ENCODE measurements at regions of chr11 and their contacts with region 1.

Region 1: DNA sequence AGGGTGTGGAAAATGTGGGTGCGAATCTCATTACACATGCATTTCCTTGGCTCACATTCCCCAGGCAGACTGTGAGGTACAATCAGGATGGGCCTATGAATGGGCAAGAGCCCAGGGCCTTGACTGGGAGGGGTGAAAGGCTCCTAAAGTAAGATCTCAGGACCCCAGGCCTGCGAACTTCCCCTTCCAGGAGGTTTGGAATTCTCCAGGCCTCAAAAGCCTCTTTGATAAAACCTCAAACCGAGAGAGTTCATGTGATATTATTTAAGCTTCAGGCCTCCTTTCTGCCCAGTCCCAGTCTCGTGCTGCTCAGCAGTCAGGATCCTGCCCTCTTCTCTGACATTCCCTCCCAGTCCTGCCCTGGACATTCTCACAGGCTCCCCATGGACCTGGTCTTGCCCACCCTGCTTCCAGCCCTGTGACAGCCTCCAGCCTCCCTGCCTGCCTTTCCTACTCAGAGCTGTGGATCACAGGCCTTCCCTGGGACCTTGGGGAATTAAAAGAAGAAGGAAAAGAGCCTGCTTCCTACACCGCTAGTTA is 37.3 kb upstream of the TEAD1 start:
- DNase-seq: no peak
- ATAC-seq: no peak
- H3K4me3 ChIP-seq: no peak overlapping the region
- H3K27ac ChIP-seq: no peak overlapping the region
- H3K4me1 ChIP-seq: no peaks in the 10 kb centered on the region
- H3K27me3 ChIP-seq: no peaks in the 10 kb centered on the region
- CTCF ChIP-seq: no peak

Region 2: DNA sequence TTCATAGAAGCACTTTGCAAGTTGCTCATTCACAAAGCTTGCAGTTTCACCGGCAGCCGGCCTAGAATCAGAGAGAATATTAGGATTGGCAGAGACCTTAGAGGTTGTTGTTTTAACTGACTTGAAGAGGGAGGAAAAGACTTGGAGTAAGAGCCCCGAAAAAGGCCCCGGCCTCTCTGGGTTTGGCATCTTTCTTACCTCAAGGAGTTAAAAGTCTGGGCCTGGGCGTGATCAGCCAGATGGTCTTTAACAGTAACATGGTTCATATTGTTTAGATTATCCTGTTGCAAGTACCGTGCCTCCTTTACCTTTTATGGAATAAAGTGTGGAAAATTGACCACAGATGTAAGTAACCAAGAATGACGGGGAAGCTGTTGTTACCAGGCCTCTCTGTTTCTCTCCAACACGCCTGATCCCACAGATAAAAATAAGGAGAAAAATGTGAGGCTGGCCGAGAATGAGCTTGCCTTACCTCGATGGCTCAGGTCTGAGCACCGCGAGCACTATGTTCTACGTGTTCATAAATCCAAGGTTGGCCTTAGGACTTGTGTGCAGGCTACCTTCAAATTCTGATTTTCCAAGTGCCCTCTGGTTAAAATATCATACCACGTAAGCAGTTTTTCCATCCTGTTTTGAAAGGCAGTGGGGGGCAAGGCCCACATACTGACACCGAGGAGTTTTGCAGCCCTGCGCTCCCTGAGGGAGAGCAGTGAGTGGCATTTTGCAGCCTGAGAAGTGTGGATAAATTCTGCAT is 203.2 kb before region 1 on chr11:
- CTCF ChIA-PET with region 1: no interaction called
- POLR2A ChIA-PET with region 1: interaction called, 10 read pairs
- intact Hi-C with region 1: no loop called
- DNase-seq: no peak
- ATAC-seq: no peak
- H3K4me3 ChIP-seq: no peak overlapping the region
- H3K27ac ChIP-seq: no peak overlapping the region
- H3K4me1 ChIP-seq: peaks cover 16% of the 10 kb centered on the region
- H3K27me3 ChIP-seq: no peaks in the 10 kb centered on the region
- CTCF ChIP-seq: no peak

Region 3: GRCh38 chr11:12598330-12599256 is 38.3 kb before region 1 on chr11:
- CTCF ChIA-PET with region 1: no interaction called
- POLR2A ChIA-PET with region 1: no interaction called
- intact Hi-C with region 1: no loop called
- DNase-seq: no peak
- ATAC-seq: no peak
- H3K4me3 ChIP-seq: no peak overlapping the region
- H3K27ac ChIP-seq: no peak overlapping the region
- H3K4me1 ChIP-seq: peaks cover 12% of the 10 kb centered on the region; the same call in 1 of the 2 replicates
- H3K27me3 ChIP-seq: no peaks in the 10 kb centered on the region
- CTCF ChIP-seq: no peak

Region 4: DNA sequence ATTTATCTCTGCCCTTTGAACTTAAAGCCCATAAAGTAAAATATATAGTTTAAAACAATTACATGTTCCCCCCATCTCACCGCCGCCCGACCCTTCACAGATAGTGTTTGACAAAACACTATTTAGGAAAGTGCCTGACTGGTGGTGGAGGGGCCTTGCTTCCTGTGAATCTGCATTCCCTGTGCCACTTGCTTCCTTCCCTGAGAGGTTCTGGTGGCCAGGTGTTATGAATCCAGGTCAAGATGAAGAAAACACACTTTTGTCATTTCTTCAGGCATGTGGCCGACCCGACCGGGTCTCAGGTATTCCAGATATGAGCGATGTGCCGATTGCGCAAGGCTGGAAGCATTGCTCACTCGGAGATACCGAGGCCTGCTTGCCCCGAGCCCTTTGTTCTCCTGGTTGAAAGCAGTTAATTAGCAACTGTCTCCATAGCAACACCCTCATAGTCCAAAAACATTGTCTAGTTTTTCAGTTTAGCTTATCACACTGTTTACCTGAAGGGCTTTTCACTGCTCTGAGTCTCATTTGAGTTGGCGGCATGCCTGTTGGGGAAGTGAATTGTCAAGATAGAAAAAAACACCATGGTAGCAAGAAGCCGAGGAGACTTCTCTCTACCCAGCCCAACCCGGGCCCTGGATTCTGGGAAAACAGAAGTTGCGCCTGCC is 165.6 kb after region 1 on chr11:
- CTCF ChIA-PET with region 1: no interaction called
- POLR2A ChIA-PET with region 1: interaction called, 13 read pairs
- intact Hi-C with region 1: no loop called
- DNase-seq: peak; percentile 95
- ATAC-seq: peak; percentile 66
- H3K4me3 ChIP-seq: peak overlapping the region; percentile 40
- H3K27ac ChIP-seq: peak overlapping the region; percentile 93
- H3K4me1 ChIP-seq: peaks cover 60% of the 10 kb centered on the region
- H3K27me3 ChIP-seq: no peaks in the 10 kb centered on the region
- CTCF ChIP-seq: no peak